ENCODE measurements at regions of chr2 and their contacts with region 1.

Region 1: GRCh38 chr2:108215794-108216211 is 24.0 kb upstream of the SULT1C3 start:
- ATAC-seq: peak in 3 of 8 experiments; percentile 81 to 95 (median 91)
- H3K4me3 ChIP-seq: no peak overlapping the region
- H3K27ac ChIP-seq: no peak overlapping the region
- H3K4me1 ChIP-seq: no peaks in the 10 kb centered on the region

Region 2: DNA sequence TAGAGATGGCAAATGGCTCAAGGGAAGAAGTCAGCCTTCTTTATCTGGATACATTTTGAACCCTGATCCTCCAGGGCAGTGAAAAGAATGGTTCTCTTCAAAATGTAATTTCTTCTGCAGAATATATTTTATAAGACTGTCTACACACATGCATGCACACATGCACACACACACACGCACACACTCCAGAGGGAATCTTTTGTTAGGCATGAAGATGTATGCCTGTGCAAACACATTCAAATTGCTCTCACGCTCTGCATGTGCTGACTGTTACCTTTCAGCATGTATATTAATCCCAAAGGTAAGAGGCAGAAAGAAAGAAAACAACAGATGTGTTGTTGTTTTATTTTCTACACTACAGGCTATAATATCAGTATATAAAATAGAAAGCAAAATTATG is 186.3 kb before region 1 on chr2:
- in situ Hi-C with region 1: no loop called
- ATAC-seq: peak in 2 of 8 experiments; percentile 27 to 65
- H3K4me3 ChIP-seq: no peak overlapping the region
- H3K27ac ChIP-seq: no peak overlapping the region
- H3K4me1 ChIP-seq: peaks cover 3 to 25% of the 10 kb centered on the region in 2 donors

Region 3: DNA sequence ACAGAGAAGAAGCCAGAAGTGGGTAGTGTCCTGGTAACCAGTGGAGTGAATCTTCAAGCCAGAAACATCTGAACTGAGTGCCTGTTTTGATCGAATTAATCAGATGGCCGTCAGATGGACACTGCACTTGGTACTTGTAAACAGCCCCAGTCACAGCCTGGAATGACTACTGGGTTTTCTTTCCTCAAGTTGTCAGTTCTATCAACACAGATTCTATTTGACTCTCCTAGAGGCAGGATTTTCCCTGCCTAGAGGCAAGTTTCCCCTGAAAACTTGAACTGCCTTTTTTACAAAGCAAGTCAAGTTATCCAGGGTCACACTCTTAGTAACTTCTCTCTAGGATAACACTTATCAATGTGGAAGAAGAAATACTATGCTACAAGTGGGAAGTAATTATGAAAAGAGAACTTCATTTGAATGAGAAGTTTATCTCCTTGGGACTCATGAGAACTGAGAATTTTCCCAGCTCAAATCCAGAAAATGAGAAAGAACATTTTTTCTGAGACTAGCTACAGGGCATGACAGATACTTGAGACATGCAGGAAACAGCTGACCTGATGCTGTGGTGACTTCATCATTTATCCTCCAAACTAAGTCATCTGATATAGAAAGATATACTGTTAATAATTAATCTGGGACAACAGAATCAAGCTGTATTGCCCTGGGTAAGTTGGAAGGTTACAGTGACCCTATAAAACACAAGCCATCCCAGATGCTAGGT is 108.9 kb after region 1 on chr2:
- in situ Hi-C with region 1: loop called in 1 of 9 experiments (anchors 25 kb)
- ATAC-seq: peak in 2 of 8 experiments; percentile 14 to 67
- H3K4me3 ChIP-seq: no peak overlapping the region
- H3K27ac ChIP-seq: no peak overlapping the region
- H3K4me1 ChIP-seq: no peaks in the 10 kb centered on the region

Region 4: GRCh38 chr2:108612153-108612513 is 396.3 kb after region 1 on chr2:
- in situ Hi-C with region 1: no loop called
- ATAC-seq: peak in 1 of 8 experiments; percentile 52
- H3K4me3 ChIP-seq: no peak overlapping the region
- H3K27ac ChIP-seq: no peak overlapping the region
- H3K4me1 ChIP-seq: peaks cover 3 to 6% of the 10 kb centered on the region in 2 donors

Region 5: GRCh38 chr2:109143214-109144187 is 927.7 kb after region 1 on chr2:
- in situ Hi-C with region 1: no loop called
- ATAC-seq: no peak
- H3K4me3 ChIP-seq: no peak overlapping the region
- H3K27ac ChIP-seq: no peak overlapping the region
- H3K4me1 ChIP-seq: peaks cover 29 to 30% of the 10 kb centered on the region in 2 donors